ENCODE measurements at regions of chr2 and their contacts with region 1.

Region 1: DNA sequence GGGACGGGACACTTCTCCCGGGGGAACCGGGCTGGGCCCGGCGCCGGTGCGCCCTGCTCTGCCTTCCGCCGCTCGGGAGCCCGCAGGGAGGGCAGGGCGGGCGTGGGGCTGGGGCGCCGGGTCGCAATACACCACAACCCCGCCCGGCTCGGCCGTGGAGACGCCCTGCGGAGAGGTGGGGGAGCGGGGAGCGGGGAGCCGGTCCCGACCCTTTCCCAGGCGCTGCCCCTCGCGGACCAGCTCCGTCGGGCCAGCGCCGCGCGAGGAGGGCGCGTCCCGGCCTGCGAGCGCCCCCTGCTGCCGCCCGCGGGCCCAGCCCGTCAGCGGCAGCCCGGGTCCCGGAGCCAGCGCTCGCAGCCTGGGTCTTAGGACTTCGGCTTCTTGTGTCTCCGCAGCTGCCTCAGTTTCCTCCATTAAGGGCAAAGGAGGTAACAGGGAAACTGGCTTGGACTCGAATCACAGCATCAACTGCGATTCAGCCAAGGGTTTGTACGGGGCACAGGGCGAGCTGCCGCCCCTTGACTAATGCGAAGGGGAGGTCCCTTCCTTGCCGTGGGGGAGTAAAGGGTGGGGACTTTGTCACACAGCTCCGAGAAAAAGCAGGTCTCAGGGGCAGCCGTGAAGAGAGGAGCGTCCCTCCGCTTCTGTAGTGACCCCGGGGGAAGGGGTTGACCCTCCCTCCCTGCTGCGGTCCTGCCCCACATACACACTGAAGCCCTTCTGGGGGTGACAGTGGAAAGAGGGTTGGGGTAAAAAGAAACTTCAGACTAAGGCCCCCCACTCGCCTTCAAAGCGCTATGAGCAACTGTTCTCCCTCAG is 717 bp upstream of the ADRA2B start:
- DNase-seq: peak in 4 of 7 donors; percentile 36 to 53 (median 50)
- H3K4me3 ChIP-seq: peak overlapping the region in 2 of 4 donors; percentile 17 to 70
- H3K27ac ChIP-seq: peak overlapping the region in 1 of 5 donors; percentile 35
- H3K4me1 ChIP-seq: peaks cover 0 to 8% of the 10 kb centered on the region in 2 donors
- H3K27me3 ChIP-seq: peaks cover 23% of the 10 kb centered on the region
- CTCF ChIP-seq: peak in 4 of 6 experiments; percentile 42 to 95 (median 90)
- POLR2A ChIP-seq: no peak

Region 2: DNA sequence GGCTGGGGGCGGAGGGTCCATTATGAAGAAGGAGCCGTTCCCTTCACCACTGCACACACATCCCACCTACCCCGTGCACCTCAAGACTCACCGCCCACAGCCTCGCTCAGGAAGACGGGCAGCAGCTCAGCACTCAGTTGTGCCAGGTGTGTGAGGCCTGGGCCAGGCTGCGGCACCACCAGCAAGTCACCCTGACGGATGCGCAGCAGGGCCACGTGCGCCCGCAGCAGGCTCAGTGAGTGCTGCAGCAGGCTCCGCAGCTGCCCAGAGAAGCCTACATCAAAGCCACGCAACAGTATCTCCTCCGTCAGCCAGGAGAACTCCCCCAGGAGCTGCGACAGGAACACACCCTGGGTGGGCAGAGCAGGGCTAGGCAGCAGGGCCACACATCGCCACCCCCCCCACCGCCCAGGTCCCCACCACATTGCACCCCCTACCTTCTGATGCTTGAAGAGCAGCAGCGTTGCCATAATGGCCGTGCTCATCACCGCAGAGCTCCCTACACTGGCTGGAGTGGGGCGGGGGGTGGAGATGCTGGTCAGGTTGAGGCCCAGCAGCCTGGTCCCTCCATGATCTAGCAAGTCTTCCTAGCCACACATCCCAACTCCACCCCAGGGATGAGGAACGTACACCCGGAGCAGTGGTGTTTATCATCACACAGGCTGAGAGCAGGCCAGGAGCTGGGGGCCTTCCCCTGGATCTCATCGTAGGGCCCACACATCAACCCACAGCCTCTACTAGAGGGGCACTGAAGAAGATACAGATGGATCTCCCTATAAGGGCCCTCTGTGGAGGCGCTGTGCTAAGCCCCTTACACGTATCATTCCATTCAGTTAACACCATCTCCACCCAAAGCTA is 92.5 kb before region 1 on chr2:
- intact Hi-C with region 1: loop called in 1 of 2 experiments (anchors 10 kb)
- DNase-seq: no peak
- H3K4me3 ChIP-seq: no peak overlapping the region
- H3K27ac ChIP-seq: no peak overlapping the region
- H3K4me1 ChIP-seq: no peaks in the 10 kb centered on the region
- H3K27me3 ChIP-seq: no peaks in the 10 kb centered on the region
- CTCF ChIP-seq: no peak
- POLR2A ChIP-seq: no peak